PC-3 (cell line): ENCODE measurements at regions of chr14 and their contacts with region 1.

Region 1: DNA sequence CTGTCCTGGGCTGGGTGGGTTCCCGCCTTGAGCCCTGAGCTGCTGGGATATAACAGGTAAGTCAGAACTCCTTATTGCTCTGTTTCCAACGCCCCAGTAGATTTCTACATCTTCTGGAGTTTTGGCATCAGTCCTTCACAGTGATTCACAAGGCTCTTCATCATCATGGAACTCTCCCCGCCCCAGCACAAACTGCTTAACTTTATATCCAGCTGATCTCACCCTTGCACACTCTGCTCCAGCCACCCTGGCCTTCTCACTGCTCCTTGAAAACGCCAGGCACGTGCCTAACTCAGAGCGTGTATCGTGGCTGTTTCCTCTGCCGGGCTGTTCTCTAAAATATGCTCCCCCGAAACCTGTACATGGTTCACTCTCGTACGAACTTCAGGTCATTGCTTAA is 264.9 kb downstream of the NOVA1 start:
- DNase-seq: peak; percentile 59
- ATAC-seq: peak; percentile 79
- H3K4me3 ChIP-seq: no peak overlapping the region
- H3K27ac ChIP-seq: peak overlapping the region; percentile 32
- H3K4me1 ChIP-seq: peaks cover 26% of the 10 kb centered on the region
- H3K27me3 ChIP-seq: no peaks in the 10 kb centered on the region
- CTCF ChIP-seq: no peak

Region 2: GRCh38 chr14:26138764-26139445 is 194.1 kb before region 1 on chr14:
- CTCF ChIA-PET with region 1: no interaction called
- POLR2A ChIA-PET with region 1: no interaction called
- intact Hi-C with region 1: no loop called
- DNase-seq: peak; percentile 26
- ATAC-seq: no peak
- H3K4me3 ChIP-seq: no peak overlapping the region
- H3K27ac ChIP-seq: no peak overlapping the region
- H3K4me1 ChIP-seq: no peaks in the 10 kb centered on the region
- H3K27me3 ChIP-seq: no peaks in the 10 kb centered on the region
- CTCF ChIP-seq: no peak

Region 3: DNA sequence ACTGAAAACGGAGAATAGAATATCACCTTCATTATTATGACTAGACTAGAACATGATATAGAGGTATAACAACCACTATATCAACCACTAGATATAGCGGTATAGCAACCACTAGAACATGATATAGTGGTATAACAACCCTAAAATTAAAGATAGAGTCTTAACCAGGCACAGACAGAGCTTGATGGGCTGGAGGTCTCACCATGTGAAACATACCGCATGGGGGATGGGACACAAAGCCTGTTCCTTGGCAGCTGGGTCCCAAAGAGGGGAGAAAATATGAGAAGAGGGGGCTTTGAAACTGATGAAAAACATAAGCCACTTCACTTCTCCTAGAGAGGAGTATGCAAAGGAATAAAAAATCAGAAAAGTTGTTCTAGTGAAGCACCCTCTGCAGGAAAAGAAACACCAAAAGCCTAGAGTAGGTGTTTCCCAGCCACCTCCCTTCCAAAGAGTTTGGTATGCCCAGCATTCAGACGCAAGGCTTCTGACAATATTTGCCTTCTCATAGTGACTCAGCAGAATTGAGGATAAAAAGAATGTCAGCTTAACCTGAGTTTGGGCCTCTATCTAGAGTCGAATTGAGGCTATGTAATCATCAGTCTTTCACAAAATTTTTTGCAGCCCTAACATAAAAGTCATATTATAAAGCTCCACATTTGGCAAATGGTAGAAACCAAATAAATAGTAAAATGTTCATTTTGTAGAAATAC is 51.5 kb before region 1 on chr14:
- CTCF ChIA-PET with region 1: no interaction called
- POLR2A ChIA-PET with region 1: no interaction called
- intact Hi-C with region 1: loop called (anchors 10 kb)
- DNase-seq: peak; percentile 82
- ATAC-seq: peak; percentile 94
- H3K4me3 ChIP-seq: no peak overlapping the region
- H3K27ac ChIP-seq: peak overlapping the region; percentile 71
- H3K4me1 ChIP-seq: peaks cover 16% of the 10 kb centered on the region
- H3K27me3 ChIP-seq: no peaks in the 10 kb centered on the region
- CTCF ChIP-seq: no peak

Region 4: GRCh38 chr14:26304056-26304455 is 28.9 kb before region 1 on chr14:
- CTCF ChIA-PET with region 1: no interaction called
- POLR2A ChIA-PET with region 1: no interaction called
- intact Hi-C with region 1: no loop called
- DNase-seq: no peak
- ATAC-seq: no peak
- H3K4me3 ChIP-seq: no peak overlapping the region
- H3K27ac ChIP-seq: no peak overlapping the region
- H3K4me1 ChIP-seq: no peaks in the 10 kb centered on the region
- H3K27me3 ChIP-seq: no peaks in the 10 kb centered on the region
- CTCF ChIP-seq: no peak

Region 5: DNA sequence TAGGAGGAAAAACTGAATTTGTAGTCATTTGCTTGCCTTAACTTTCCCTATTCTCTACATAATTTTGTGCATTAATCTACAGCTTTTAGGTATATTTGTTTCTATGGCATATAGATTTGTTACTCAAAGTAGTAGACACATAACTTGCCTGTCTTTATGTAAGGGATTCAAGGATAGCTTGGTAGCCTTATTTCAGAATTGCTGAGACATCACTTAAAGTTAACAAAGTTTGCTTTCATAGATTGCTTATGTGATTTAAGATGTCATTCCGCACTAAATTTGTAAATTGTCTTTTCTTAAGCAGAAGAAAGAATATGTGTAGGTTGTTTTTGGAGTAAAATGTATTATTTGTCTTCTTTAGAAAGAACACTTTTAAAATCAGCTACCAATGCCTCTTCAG is 742.5 kb after region 1 on chr14:
- CTCF ChIA-PET with region 1: no interaction called
- POLR2A ChIA-PET with region 1: interaction called, 10 read pairs
- intact Hi-C with region 1: no loop called
- DNase-seq: no peak
- ATAC-seq: no peak
- H3K4me3 ChIP-seq: no peak overlapping the region
- H3K27ac ChIP-seq: no peak overlapping the region
- H3K4me1 ChIP-seq: no peaks in the 10 kb centered on the region
- H3K27me3 ChIP-seq: no peaks in the 10 kb centered on the region
- CTCF ChIP-seq: no peak